Activated CD4-positive, alpha-beta memory T cell treated with anti-CD3 and anti-CD28 coated beads for 36 hours (primary cell): ENCODE measurements at regions of chr4 and their contacts with region 1.

Region 1: DNA sequence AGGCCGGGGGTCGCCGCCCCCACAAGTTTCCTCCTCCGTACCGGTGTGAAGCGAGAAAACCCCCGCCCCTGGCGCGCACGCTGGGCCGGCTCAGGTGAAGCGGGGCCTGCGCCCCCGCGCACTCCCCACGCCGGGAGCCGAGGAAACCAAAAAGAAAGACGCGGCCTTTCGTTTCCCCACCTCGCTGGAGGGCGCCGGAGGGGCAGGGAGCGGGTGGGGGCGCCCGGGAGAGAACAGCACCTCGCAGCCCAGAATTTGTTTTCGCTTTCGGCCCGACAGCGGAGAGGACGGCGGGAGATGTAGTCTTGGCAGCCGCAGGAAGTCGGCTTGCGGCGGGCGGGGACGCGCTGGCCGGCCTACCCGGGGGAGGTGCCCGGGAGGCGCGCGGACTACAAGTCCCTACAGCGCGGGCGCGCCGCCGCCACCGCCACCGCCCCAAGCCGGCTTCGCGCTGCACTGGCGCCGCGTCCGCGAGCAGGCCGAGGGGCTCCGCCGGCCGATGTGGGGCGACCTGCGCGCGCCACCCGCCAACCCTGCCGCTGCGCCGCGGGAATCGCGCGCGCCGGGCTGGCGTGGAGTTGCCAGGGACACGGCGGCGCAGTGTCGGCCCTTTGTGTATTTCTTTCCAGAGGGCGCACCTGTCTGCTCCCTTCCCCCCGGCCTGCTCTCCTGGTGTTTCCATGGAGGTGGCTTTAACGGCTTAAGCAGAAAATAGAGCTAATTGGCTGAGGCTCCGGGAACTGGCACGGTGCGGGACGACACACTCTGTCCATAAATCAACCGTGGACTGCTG is at the start of gene OTUD4:
- DNase-seq: peak; percentile 97
- H3K4me3 Mint-ChIP-seq: peak within 1 kb of the TSS; percentile 96
- H3K27ac Mint-ChIP-seq: peak within 1 kb of the TSS; percentile 98
- H3K4me1 Mint-ChIP-seq: peaks cover 25% of the 10 kb centered on the region
- H3K27me3 Mint-ChIP-seq: no peaks in the 10 kb centered on the region
- total RNA-seq, gene OTUD4: 41.5 to 43.3 TPM

Region 2: GRCh38 chr4:143184217-143185116 is 1996.0 kb before region 1 on chr4 and contains the start of gene USP38:
- CTCF ChIA-PET with region 1: no interaction called
- POLR2A ChIA-PET with region 1: no interaction called
- intact Hi-C with region 1: loop called (anchors 10 kb)
- DNase-seq: peak; percentile 96
- H3K4me3 Mint-ChIP-seq: peak within 1 kb of the TSS; percentile 87
- H3K27ac Mint-ChIP-seq: peak within 1 kb of the TSS; percentile 94
- H3K4me1 Mint-ChIP-seq: peaks cover 28% of the 10 kb centered on the region
- H3K27me3 Mint-ChIP-seq: no peaks in the 10 kb centered on the region
- total RNA-seq, gene USP38: 21.7 to 22.0 TPM

Region 3: GRCh38 chr4:144174401-144175067 is 1006.0 kb before region 1 on chr4:
- CTCF ChIA-PET with region 1: no interaction called
- POLR2A ChIA-PET with region 1: no interaction called
- intact Hi-C with region 1: loop called (anchors 5 kb)
- DNase-seq: peak; percentile 40
- H3K4me3 Mint-ChIP-seq: no peak overlapping the region
- H3K27ac Mint-ChIP-seq: peak overlapping the region; percentile 70
- H3K4me1 Mint-ChIP-seq: peaks cover 18% of the 10 kb centered on the region
- H3K27me3 Mint-ChIP-seq: peaks cover 3% of the 10 kb centered on the region

Region 4: GRCh38 chr4:145019346-145019745 is 161.1 kb before region 1 on chr4:
- CTCF ChIA-PET with region 1: no interaction called
- POLR2A ChIA-PET with region 1: no interaction called
- intact Hi-C with region 1: no loop called
- DNase-seq: no peak
- H3K4me3 Mint-ChIP-seq: no peak overlapping the region
- H3K27ac Mint-ChIP-seq: peak overlapping the region; percentile 61
- H3K4me1 Mint-ChIP-seq: peaks cover 27% of the 10 kb centered on the region
- H3K27me3 Mint-ChIP-seq: no peaks in the 10 kb centered on the region

Region 5: DNA sequence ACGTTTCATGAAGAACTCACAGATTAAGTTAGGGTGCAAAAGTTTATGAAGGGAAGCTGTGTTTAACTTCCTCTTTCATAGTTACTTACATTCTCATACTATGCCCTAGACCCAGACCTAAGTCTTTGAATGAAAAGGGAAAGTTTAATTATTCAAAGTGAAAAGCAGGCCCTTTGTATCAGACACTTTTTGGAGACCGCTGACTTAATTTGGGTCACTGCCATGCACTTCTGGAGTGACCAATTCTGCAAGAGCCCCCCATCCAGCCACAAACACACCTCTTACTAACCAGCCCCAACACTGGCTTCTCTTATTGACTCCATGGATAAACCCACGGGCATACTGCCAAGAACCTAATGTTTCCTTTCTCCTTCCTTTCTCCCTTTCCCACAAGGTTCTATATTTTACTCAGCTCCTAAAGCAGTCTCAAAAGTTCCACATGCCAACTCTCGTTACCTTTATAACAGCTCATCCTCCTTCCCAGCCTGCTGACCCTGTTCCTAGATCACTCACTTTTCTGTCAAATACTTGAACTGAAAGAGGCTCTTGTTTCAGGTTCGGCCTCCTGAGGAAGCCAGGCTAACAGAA is 47.9 kb before region 1 on chr4:
- CTCF ChIA-PET with region 1: interaction called, 3 read pairs
- POLR2A ChIA-PET with region 1: interaction called, 3 read pairs
- intact Hi-C with region 1: loop called (anchors 1 kb)
- DNase-seq: peak; percentile 56
- H3K4me3 Mint-ChIP-seq: no peak overlapping the region
- H3K27ac Mint-ChIP-seq: peak overlapping the region; percentile 52
- H3K4me1 Mint-ChIP-seq: peaks cover 59% of the 10 kb centered on the region
- H3K27me3 Mint-ChIP-seq: no peaks in the 10 kb centered on the region

Region 6: GRCh38 chr4:145299380-145300076 is 119.0 kb after region 1 on chr4:
- CTCF ChIA-PET with region 1: no interaction called
- POLR2A ChIA-PET with region 1: interaction called, 3 read pairs
- intact Hi-C with region 1: loop called (anchors 1 kb)
- DNase-seq: peak; percentile 86
- H3K4me3 Mint-ChIP-seq: no peak overlapping the region
- H3K27ac Mint-ChIP-seq: no peak overlapping the region
- H3K4me1 Mint-ChIP-seq: peaks cover 17% of the 10 kb centered on the region
- H3K27me3 Mint-ChIP-seq: peaks cover 22% of the 10 kb centered on the region

Region 7: DNA sequence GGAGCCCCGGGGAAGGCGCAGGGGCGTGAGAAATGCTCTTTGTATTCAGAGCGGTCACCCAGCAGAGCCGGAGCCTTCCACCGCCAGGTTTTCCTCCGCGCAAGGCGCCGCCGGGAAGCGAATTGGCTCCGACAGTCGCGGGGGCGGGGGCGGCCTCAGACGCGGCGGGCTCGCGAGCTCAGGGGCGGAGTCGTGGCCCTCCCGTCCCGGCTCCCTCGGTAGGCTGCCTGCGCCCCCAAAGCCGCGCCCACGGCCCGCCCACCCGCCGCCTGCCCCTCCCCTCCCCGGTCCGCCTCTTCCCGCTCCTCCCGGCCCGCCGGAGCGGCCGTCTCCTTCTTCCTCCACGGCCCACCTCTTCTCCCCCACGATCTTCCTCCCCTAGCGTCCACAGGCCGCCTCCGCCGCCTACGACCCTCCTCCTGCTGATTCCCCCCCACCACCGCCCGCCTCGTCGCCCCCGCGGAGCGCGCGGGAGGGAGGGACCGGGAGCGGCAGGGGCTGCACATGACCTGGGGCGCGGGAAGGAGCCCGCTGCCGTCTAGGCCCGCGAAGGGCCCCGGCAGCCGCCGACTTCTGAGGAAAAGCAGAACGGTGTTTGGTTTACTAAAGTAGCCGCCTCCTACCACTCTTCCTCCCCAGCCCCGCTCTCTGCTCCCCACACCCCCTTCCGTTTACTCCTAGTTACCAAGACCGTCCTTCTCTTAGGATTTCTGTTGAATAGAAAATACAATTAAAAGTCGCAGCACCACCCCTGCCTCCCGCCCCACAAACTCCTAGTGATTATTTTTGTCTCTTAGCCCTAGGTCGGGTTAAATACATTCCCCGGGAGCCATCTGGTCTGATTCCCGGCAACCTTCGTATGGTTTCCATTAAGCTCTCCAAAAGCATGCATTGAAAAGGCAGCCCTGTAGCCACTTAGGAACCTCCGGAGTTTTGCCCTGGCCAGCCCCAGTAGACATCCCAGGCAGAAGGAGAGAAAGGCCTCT is 552.7 kb after region 1 on chr4:
- CTCF ChIA-PET with region 1: no interaction called
- POLR2A ChIA-PET with region 1: no interaction called
- intact Hi-C with region 1: loop called (anchors 2 kb)
- DNase-seq: peak; percentile 92
- H3K4me3 Mint-ChIP-seq: peak overlapping the region; percentile 69
- H3K27ac Mint-ChIP-seq: peak overlapping the region; percentile 62
- H3K4me1 Mint-ChIP-seq: peaks cover 29% of the 10 kb centered on the region
- H3K27me3 Mint-ChIP-seq: peaks cover 6% of the 10 kb centered on the region

Region 8: GRCh38 chr4:145936142-145936996 is 755.9 kb after region 1 on chr4:
- CTCF ChIA-PET with region 1: no interaction called
- POLR2A ChIA-PET with region 1: interaction called, 3 read pairs
- intact Hi-C with region 1: loop called (anchors 1 kb)
- DNase-seq: peak; percentile 72
- H3K4me3 Mint-ChIP-seq: peak overlapping the region; percentile 90
- H3K27ac Mint-ChIP-seq: peak overlapping the region; percentile 97
- H3K4me1 Mint-ChIP-seq: peaks cover 43% of the 10 kb centered on the region
- H3K27me3 Mint-ChIP-seq: peaks cover 1% of the 10 kb centered on the region

Region 9: GRCh38 chr4:146654687-146655520 is 1474.4 kb after region 1 on chr4:
- CTCF ChIA-PET with region 1: no interaction called
- POLR2A ChIA-PET with region 1: no interaction called
- intact Hi-C with region 1: no loop called
- DNase-seq: no peak
- H3K4me3 Mint-ChIP-seq: peak overlapping the region; percentile 43
- H3K27ac Mint-ChIP-seq: no peak overlapping the region
- H3K4me1 Mint-ChIP-seq: peaks cover 14% of the 10 kb centered on the region
- H3K27me3 Mint-ChIP-seq: peaks cover 51% of the 10 kb centered on the region